Activated CD4-positive, alpha-beta memory T cell treated with anti-CD3 and anti-CD28 coated beads for 36 hours (primary cell): ENCODE measurements at regions of chr11 and their contacts with region 1.

Region 1: GRCh38 chr11:134050541-134051383 is 18.1 kb upstream of the JAM3 start:
- DNase-seq: peak; percentile 81
- H3K4me3 Mint-ChIP-seq: peak overlapping the region; percentile 67
- H3K27ac Mint-ChIP-seq: peak overlapping the region; percentile 74
- H3K4me1 Mint-ChIP-seq: peaks cover 5% of the 10 kb centered on the region
- H3K27me3 Mint-ChIP-seq: peaks cover 24% of the 10 kb centered on the region

Region 2: GRCh38 chr11:133809569-133810491 is 240.9 kb before region 1 on chr11:
- CTCF ChIA-PET with region 1: no interaction called
- POLR2A ChIA-PET with region 1: no interaction called
- intact Hi-C with region 1: no loop called
- DNase-seq: no peak
- H3K4me3 Mint-ChIP-seq: no peak overlapping the region
- H3K27ac Mint-ChIP-seq: no peak overlapping the region
- H3K4me1 Mint-ChIP-seq: no peaks in the 10 kb centered on the region
- H3K27me3 Mint-ChIP-seq: peaks cover 12% of the 10 kb centered on the region

Region 3: DNA sequence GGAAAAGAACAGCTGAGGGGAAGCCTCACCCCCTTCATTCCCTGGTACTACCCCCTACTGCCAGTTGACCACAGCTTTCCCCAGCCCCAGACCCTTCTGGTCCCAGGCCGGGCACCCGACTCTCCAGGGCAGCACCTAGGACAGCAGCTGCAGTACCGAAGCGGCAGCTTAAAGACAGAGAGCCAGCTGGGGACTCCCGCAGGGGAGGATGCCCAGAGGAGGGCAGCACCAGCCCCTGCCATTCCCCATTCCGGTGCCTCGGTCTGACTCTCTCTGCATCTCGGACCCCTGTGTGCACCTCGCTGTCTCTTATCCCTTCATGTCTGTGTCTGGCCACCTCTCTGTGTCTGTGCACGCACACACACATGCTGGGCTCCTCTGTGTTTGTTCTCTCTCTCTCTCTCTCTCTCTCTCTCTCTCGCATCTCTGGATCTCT is 103.4 kb before region 1 on chr11:
- CTCF ChIA-PET with region 1: interaction called, 3 read pairs
- POLR2A ChIA-PET with region 1: no interaction called
- intact Hi-C with region 1: loop called (anchors 5 kb)
- DNase-seq: peak; percentile 83
- H3K4me3 Mint-ChIP-seq: peak overlapping the region; percentile 33
- H3K27ac Mint-ChIP-seq: peak overlapping the region; percentile 42
- H3K4me1 Mint-ChIP-seq: peaks cover 67% of the 10 kb centered on the region
- H3K27me3 Mint-ChIP-seq: no peaks in the 10 kb centered on the region

Region 4: GRCh38 chr11:134040386-134041302 is 10.1 kb before region 1 on chr11:
- CTCF ChIA-PET with region 1: interaction called, 36 read pairs
- POLR2A ChIA-PET with region 1: interaction called, 4 read pairs
- intact Hi-C with region 1: no loop called
- DNase-seq: no peak
- H3K4me3 Mint-ChIP-seq: no peak overlapping the region
- H3K27ac Mint-ChIP-seq: no peak overlapping the region
- H3K4me1 Mint-ChIP-seq: peaks cover 15% of the 10 kb centered on the region
- H3K27me3 Mint-ChIP-seq: no peaks in the 10 kb centered on the region

Region 5: GRCh38 chr11:134068829-134069425 is 18.2 kb after region 1 on chr11 and contains the start of gene JAM3:
- CTCF ChIA-PET with region 1: interaction called, 36 read pairs
- POLR2A ChIA-PET with region 1: interaction called, 3 read pairs
- intact Hi-C with region 1: no loop called
- DNase-seq: peak; percentile 96
- H3K4me3 Mint-ChIP-seq: peak within 1 kb of the TSS; percentile 90
- H3K27ac Mint-ChIP-seq: no peak within 1 kb of the TSS
- H3K4me1 Mint-ChIP-seq: peaks cover 10% of the 10 kb centered on the region
- H3K27me3 Mint-ChIP-seq: peaks cover 6% of the 10 kb centered on the region
- total RNA-seq, gene JAM3: 6.3 to 9.0 TPM

Region 6: GRCh38 chr11:134139873-134140331 is 89.1 kb after region 1 on chr11:
- CTCF ChIA-PET with region 1: interaction called, 60 read pairs
- POLR2A ChIA-PET with region 1: no interaction called
- intact Hi-C with region 1: loop called (anchors 1 kb)
- DNase-seq: peak; percentile 56
- H3K4me3 Mint-ChIP-seq: no peak overlapping the region
- H3K27ac Mint-ChIP-seq: no peak overlapping the region
- H3K4me1 Mint-ChIP-seq: peaks cover 14% of the 10 kb centered on the region
- H3K27me3 Mint-ChIP-seq: no peaks in the 10 kb centered on the region

Region 7: DNA sequence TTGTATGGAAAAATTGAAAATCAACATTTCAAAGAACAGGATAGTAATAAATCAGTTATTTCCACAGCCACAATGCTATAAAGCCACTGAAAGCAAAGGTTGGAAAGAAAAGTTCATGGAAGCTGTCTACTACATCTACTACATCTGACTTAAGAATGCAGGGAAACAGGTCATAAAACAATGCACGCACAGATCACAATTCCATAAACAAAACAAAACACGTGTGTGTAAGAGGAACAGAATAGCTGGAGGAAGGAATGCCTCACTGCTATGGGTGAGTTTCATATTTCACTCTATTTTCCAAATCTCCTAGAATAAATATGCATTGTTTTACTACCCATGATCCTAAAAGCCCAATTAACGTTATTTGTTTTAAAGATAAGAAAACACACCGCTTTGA is 106.7 kb after region 1 on chr11:
- CTCF ChIA-PET with region 1: no interaction called
- POLR2A ChIA-PET with region 1: no interaction called
- intact Hi-C with region 1: no loop called
- DNase-seq: no peak
- H3K4me3 Mint-ChIP-seq: no peak overlapping the region
- H3K27ac Mint-ChIP-seq: no peak overlapping the region
- H3K4me1 Mint-ChIP-seq: no peaks in the 10 kb centered on the region
- H3K27me3 Mint-ChIP-seq: no peaks in the 10 kb centered on the region